Sigmoid colon (tissue), 7 donors: ENCODE measurements at regions of chr3 and their contacts with region 1.

Region 1: DNA sequence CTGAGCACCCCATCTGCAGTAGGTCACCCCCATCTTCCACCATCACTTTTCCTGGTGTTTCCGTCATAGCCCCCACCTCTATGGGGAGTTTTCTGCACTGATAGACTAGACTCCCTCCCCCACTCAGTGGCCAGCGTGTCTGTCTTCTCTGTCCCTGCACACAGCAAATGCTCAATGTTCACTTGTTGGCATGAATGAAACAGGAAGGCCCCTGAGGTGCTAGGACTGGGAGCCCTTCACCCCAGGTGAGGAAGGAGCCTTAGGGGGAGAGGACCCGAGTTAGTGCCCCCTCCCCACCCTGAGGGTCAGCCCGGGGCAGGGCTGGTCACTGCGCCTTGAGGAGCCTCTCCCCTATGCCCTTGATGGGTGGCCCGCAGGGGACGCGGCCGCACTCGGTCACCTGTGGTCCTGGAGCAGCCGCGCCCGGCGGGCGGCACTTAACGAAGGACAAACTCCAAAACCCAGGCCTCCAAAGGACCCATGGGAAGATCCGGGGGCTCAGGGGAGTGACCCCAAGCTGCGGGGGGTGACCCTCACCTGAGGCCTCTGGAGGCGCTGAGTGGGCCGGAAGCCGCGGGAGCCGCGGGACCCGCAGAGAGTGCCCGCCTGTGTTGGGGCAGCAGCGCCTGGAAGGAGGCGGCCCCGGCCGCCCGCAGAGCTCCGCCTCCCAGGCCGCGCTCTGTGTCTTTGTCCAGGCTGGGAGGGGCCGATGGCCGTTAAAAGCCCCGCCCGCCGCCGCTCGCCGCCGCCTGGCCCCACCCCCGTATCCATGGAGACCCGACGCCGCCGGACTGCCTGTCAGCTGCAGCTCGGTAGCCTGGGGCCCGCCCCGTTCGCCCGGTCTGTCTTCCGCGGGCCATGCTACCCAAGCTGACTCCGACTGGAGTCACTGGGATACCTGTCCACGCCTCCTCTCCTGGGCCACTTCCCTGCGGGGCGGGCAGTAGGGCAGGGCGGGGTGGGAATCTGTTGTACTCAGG is 15.5 kb upstream of the FANCD2 start:
- DNase-seq: peak; percentile 98
- H3K4me3 ChIP-seq: peak overlapping the region; percentile 53 to 67 (median 66)
- H3K27ac ChIP-seq: peak overlapping the region; percentile 80 to 84 (median 81)
- H3K4me1 ChIP-seq: peaks cover 0 to 44% (median 44%) of the 10 kb centered on the region in 4 donors
- H3K27me3 ChIP-seq: no peaks in the 10 kb centered on the region
- CTCF ChIP-seq: no peak
- EP300 ChIP-seq: no peak
- POLR2A ChIP-seq: peak; percentile 35 to 37

Region 2: DNA sequence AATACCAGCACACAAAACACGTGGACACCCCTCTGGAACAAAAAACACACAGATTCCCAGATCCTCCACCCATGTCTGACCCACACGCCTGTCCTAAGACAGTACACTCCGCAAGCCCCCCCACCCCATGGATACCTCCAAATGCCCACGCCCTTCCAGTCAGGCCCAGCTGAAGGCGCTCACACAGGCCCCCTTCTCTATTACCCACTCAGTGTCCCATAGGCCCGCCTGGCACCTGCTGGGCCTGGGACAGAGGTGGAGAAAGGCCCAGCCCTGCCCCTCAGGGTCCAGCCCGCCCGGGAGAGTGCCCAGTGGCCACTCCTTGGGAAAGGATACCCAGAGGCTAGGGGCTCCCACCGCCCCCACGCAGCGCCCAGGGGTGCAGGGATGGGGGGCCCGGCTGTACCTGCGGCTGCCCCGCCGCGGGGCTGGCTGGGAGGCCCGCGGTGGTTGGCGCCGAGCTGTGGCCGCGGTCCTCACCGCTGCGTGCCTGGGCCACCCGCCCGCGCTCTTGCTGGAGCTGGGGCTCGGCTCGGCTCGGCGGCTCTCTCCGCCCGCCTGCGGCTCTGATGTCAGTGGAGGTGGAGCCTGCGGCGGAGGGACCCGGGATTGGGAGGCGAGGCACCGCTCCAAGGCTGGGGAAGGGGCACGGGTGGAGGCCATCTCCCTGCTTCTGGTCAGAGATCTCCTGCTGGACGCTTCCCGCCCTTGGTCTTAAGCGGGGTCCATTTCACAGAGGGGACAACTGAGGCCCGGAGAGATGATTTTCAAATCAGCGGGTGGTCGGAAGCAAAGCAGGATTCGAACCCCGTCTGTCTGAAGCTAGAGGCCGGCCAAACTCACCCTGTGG is 241.1 kb before region 1 on chr3 and contains the start of gene CAMK1:
- intact Hi-C with region 1: loop called (anchors 5 kb)
- DNase-seq: peak; percentile 94
- H3K4me3 ChIP-seq: peak within 1 kb of the TSS; percentile 60 to 83 (median 74)
- H3K27ac ChIP-seq: peak within 1 kb of the TSS; percentile 85 to 89 (median 87)
- H3K4me1 ChIP-seq: peaks cover 0 to 40% (median 32%) of the 10 kb centered on the region in 4 donors
- H3K27me3 ChIP-seq: no peaks in the 10 kb centered on the region
- CTCF ChIP-seq: no peak
- EP300 ChIP-seq: no peak
- POLR2A ChIP-seq: no peak
- total RNA-seq, gene CAMK1: 45.7 to 57.8 (median 56.5) TPM

Region 3: DNA sequence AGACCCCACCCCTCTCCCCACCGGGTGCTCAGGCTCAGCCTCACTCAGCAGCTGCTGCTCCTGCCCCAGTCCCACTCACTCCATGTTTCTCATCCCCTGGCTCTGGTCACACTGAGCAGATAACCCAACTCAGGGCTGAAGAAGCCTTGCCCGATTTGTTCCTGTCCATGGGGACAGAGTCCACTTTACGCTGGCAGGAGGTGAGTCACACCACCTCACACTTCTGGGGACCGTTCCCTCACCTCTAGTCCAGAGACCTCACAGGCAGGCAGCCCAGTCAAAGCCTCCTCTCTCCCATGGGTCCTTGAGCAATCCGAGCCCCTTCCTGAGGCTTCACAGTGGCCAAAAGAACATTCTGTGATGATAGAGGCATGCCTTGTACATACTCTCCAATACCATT is 132.1 kb before region 1 on chr3:
- intact Hi-C with region 1: no loop called
- DNase-seq: no peak
- H3K4me3 ChIP-seq: no peak overlapping the region
- H3K27ac ChIP-seq: no peak overlapping the region
- H3K4me1 ChIP-seq: peaks cover 0 to 2% (median 2%) of the 10 kb centered on the region in 4 donors
- H3K27me3 ChIP-seq: no peaks in the 10 kb centered on the region
- CTCF ChIP-seq: no peak
- EP300 ChIP-seq: no peak
- POLR2A ChIP-seq: no peak

Region 4: DNA sequence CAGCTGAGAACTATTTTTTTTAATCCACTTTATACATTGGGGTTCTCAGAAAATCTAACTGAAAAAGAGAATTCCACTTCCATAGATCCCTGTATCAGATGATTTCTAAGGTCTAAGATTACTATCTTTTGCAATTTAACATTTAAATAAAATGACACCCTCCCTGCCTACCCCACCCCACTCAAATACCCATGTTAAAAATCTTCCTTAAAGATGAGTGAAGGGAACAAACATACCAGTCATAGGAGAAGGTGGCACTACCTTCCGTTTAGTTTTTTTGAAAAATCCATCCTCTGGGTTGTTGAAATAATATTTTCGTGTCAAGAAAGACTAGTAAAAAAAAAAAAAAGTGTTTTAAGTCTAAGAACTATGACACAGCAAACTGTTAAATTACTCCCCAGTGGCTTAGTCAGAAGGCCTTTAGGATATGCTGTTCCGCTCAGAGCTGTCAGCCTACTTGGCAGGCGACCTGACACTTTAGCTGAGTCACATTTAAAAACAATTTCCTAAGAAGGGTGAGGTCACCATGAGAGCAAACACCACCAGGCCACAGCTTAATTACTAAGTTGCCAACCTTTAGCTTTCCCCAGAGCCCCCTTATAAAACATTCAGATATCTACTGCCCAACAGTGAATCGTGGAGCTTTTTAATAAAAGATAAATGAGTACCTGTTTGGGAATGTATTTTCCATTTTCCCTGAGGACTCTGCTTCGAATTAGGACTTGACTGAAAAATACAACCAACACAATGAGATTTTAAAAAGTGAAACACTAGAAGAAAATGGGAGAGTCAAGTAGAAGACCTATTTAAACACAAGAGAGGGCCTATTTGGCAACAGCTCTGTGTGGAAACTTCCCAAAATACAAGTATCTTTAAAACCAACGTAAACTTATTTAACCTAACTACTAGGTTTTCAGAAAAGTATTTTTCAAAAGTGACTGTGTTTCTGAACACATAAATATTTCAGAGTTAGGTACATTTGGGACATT is 33.8 kb before region 1 on chr3:
- intact Hi-C with region 1: loop called (anchors 5 kb)
- DNase-seq: peak; percentile 95
- H3K4me3 ChIP-seq: no peak overlapping the region
- H3K27ac ChIP-seq: peak overlapping the region; percentile 77 to 85 (median 82)
- H3K4me1 ChIP-seq: peaks cover 0 to 27% (median 20%) of the 10 kb centered on the region in 4 donors
- H3K27me3 ChIP-seq: no peaks in the 10 kb centered on the region
- CTCF ChIP-seq: no peak
- EP300 ChIP-seq: peak in 3 of 4 donors; percentile 14 to 54 (median 46)
- POLR2A ChIP-seq: no peak

Region 5: DNA sequence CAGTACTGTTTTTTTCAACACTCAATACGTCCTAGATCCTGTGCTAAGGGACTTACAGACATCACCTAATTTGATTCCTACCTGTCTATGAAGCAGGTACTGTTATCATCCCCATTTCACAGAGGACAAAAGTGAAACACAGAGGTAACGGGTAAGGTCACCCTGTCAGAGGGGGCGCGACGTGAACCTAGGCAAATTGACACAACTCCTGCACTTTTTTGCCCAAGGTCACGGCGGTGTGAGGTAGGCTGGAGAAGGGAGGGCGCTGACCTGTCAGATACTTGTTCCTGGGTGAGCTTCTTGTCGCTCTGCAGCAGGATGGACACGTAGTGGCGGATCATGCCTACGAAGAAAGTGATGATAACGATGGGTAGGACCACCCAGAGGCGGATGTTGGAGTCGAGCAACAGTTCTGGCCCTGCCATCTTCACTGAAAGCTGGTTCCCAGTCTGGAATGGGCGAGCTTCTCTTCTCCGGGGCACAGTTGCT is 24.5 kb before region 1 on chr3:
- intact Hi-C with region 1: loop called (anchors 2 kb)
- DNase-seq: no peak
- H3K4me3 ChIP-seq: peak overlapping the region; percentile 62 to 94 (median 86)
- H3K27ac ChIP-seq: peak overlapping the region; percentile 78 to 87 (median 82)
- H3K4me1 ChIP-seq: peaks cover 0 to 39% (median 38%) of the 10 kb centered on the region in 4 donors
- H3K27me3 ChIP-seq: no peaks in the 10 kb centered on the region
- CTCF ChIP-seq: no peak
- EP300 ChIP-seq: no peak
- POLR2A ChIP-seq: no peak

Region 6: DNA sequence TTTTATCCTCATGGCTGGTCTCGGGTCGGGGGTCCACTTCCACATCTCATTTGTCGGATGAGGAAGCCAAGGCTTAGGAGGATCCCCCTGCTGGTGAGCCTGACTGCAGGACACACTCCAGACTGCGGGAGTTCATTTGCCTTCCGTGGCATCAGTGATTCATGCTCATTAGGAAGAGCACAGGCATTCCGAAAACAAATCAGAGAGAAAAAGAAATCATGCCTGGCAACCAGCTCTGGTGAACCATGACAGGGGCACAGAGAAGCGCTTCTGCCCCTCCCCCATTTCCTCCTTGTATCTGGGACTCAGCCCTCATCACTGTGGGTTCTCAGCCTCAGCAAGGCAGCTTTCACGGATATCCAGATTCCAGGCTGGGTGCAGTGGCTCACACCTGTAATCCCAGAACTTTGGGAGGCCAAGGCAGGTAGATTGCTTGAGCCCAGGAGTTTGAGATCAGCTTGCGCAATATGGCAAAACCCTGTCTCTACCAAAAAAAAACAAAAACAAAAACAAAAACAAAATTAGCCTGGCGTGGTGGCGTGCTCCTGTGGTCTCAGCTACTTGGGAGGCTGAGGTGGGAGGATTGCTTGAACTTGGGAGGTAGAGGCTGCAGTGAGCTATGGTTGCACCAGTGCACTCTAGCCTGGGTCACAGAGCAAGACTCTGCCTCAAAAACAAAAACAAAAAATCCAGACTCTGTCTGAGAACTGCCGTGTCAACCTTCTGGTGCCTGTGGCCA is 182.3 kb after region 1 on chr3:
- intact Hi-C with region 1: no loop called
- DNase-seq: no peak
- H3K4me3 ChIP-seq: no peak overlapping the region
- H3K27ac ChIP-seq: peak overlapping the region; percentile 84 to 90 (median 86)
- H3K4me1 ChIP-seq: peaks cover 0 to 82% (median 72%) of the 10 kb centered on the region in 4 donors
- H3K27me3 ChIP-seq: no peaks in the 10 kb centered on the region
- CTCF ChIP-seq: peak in 2 of 4 experiments; percentile 11 to 35
- EP300 ChIP-seq: no peak
- POLR2A ChIP-seq: no peak